Activated CD4-positive, alpha-beta T cell treated with anti-CD3 and anti-CD28 coated beads, Interleukin-2, amount 10 ng/mL, durations not matched to agents 24 days and 14 days (primary cell): ENCODE measurements at regions of chr18 and their contacts with region 1.

Region 1: DNA sequence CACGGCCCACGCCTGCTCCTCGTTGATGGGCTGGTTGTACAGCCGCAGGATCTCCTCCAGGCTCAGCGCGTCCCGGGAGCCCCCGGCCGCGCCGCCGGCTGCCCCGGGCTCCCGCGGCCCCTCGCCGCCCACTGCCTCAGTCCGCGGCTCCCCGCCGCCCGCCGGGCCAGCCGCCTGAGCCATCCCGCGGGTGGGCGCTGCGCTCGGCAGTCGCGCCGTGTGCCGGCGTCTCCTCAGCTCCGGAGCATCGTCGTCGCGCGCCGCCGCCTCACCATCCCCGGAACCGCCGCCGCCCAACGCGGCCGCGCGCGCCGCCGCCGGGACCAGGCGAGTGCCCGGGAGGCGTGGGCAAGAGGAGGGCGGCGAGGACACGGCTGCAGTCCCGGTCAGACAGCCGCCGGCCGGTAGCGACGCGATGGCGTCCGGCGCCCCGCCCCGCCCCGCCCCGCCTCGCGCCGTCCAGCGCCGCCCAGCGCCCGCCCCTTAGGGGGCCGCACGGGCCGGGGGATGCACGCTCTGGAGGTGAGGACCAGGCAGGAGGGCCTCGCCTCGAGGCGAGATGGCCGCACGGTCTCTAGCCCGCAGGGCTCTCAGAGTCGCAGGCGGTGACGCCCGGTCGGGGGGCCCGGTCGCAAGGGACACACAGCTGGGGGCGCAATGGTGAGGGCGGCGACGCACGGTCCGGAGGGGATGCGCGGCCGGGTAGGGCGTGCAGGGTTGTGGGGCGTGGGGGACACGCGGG is at the start of gene SPIRE1:
- DNase-seq: peak; percentile 86
- H3K4me3 Mint-ChIP-seq: peak within 1 kb of the TSS; percentile 86
- H3K27ac Mint-ChIP-seq: peak within 1 kb of the TSS; percentile 77
- H3K4me1 Mint-ChIP-seq: peaks cover 25% of the 10 kb centered on the region
- H3K27me3 Mint-ChIP-seq: peaks cover 23% of the 10 kb centered on the region
- total RNA-seq, gene SPIRE1: 7.6 and 8.4 TPM in 2 replicates

Region 2: DNA sequence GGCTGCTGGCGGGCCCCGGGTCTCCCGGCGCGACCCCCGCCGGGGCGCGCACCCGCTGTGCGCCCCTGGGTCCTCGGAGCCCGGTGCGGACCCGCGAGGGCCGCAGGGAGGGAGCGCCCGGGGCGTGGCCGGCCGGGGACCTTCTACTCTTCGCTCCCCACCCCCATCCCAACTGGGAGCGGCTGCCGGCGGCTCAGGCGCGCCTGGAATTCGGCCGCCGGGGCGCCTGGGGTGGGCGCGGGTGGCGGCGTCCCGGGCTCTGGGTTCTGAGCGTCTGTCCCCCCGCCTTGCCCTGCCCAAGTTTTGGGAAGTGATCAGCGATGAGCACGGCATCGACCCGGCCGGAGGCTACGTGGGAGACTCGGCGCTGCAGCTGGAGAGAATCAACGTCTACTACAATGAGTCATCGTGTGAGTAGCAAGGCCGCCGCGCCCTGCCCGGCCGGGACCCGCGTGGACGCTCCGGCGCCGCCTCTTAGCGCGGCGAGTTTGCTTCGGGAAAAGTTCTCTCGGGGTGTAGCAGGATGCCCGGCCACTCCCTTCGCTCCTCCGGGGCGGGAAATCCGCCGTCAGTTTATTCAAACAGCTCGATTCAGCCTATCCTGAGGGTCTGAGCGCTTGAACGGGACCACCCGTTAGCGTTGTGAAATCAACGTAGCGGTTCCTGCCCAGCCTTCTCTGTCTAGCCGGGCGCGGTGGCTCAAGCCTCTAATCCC is 349.3 kb before region 1 on chr18:
- intact Hi-C with region 1: loop called (anchors 1 kb)
- DNase-seq: peak; percentile 79
- H3K4me3 Mint-ChIP-seq: peak overlapping the region; percentile 82
- H3K27ac Mint-ChIP-seq: peak overlapping the region; percentile 60
- H3K4me1 Mint-ChIP-seq: peaks cover 16% of the 10 kb centered on the region
- H3K27me3 Mint-ChIP-seq: peaks cover 35% of the 10 kb centered on the region

Region 3: DNA sequence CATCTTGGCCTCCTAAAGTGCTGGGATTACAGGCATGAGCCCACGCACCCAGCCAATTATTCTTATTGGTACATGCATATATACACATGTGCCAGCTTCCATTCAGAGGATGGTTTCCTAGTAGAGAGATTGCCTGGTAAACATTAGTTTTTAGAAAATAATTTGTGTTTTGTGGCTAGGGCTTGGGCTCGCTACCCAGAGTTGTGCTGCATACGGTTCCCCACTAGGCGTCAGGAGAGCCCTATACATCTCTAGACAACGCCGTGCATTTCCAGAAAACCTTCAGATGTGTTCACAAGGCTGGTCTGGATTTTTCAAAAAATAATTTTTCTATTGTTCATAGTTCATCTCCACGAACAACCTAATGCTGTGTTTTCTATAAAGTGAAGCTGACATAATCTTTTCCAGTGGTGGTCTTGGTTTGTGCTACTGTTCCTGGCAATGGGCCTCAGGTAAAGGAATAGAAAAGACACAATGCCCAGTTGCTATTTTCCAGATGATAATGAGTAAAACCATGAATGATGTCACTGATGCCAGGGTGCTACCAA is 266.2 kb before region 1 on chr18:
- intact Hi-C with region 1: loop called (anchors 1 kb)
- DNase-seq: peak; percentile 85
- H3K4me3 Mint-ChIP-seq: no peak overlapping the region
- H3K27ac Mint-ChIP-seq: no peak overlapping the region
- H3K4me1 Mint-ChIP-seq: no peaks in the 10 kb centered on the region
- H3K27me3 Mint-ChIP-seq: peaks cover 6% of the 10 kb centered on the region

Region 4: DNA sequence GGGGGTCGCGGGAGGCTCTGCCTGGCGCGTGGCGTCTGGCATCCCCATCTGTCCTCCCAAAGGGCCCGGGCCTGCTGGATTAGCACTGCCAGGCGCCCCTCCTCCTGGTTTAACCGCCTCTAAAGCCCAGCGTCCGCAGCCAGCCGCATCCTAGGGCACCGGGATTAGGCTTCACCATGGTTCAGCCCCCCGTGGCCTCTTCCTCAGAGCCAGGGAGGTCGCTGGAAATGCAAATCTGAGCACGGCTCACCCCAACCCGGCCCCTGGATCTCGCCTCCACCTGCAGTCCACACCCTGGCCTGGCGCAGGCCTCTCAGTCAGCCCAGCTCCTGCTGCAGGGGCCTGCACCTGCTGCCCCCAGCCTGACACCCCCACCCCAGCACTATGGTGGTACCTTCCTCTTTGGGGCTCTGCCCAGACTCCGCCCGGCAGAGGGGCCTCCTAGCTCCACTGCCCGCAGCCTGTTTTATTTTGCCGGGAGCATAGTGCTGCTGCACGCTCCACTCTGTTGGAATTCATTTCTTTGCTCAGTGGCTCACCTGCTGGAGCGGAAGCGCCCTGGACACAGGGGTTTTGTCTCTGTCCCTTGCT is 236.9 kb before region 1 on chr18:
- intact Hi-C with region 1: loop called (anchors 1 kb)
- DNase-seq: no peak
- H3K4me3 Mint-ChIP-seq: peak overlapping the region; percentile 72
- H3K27ac Mint-ChIP-seq: peak overlapping the region; percentile 66
- H3K4me1 Mint-ChIP-seq: peaks cover 9% of the 10 kb centered on the region
- H3K27me3 Mint-ChIP-seq: no peaks in the 10 kb centered on the region

Region 5: GRCh38 chr18:12574494-12575185 is 83.2 kb before region 1 on chr18:
- intact Hi-C with region 1: no loop called
- DNase-seq: no peak
- H3K4me3 Mint-ChIP-seq: no peak overlapping the region
- H3K27ac Mint-ChIP-seq: no peak overlapping the region
- H3K4me1 Mint-ChIP-seq: no peaks in the 10 kb centered on the region
- H3K27me3 Mint-ChIP-seq: peaks cover 9% of the 10 kb centered on the region

Region 6: DNA sequence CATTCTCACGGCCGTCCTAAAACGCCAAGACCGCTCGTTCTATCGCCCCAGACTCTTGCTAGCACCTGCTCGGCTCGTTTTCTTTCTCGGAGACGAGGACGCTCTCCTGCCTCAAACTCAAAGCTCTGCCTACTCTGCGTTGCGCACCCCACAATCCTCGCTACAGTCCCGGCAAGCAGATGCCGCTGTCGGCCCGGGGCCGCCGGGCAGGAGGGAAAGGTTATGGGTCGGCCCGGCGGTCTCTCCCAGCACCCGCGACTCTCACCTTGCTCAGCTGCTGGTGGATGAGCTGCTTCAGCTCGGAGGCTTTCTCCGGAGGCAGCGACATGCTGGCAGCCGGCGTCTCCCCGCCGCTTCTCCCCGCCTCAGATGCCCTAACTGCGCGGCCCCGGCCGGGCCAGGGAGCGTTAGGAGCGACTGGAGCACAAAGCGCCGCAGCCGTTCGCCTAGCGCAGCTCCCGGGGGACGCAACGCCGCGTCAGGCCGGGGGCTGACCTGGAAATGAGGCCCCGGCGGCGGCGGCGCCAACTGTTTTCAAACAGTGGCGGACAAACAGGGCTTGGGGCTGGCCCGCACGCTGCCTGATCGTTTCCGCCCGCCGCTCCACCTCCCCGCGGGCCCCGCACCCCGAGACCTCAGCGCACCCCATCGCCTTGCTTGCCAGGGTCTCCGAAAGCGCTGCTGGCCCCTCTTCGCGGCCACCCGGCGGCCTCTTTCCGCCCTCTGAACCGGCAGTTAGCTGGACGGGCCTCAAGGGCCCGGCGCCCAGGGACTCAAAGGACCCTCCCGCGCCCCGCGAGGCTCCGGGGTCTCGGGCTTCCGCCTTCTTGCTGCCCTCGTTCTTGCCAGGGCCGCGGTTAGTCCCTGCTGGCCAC is 44.6 kb after region 1 on chr18 and contains the starts of genes CEP76 and PSMG2:
- intact Hi-C with region 1: loop called (anchors 2 kb)
- DNase-seq: peak; percentile 96
- H3K4me3 Mint-ChIP-seq: peak within 1 kb of the TSS; percentile 97
- H3K27ac Mint-ChIP-seq: peak within 1 kb of the TSS; percentile 97
- H3K4me1 Mint-ChIP-seq: peaks cover 36% of the 10 kb centered on the region
- H3K27me3 Mint-ChIP-seq: no peaks in the 10 kb centered on the region
- total RNA-seq, gene CEP76: 14.4 and 16.3 TPM in 2 replicates
- total RNA-seq, gene PSMG2: 109 and 111 TPM in 2 replicates

Region 7: DNA sequence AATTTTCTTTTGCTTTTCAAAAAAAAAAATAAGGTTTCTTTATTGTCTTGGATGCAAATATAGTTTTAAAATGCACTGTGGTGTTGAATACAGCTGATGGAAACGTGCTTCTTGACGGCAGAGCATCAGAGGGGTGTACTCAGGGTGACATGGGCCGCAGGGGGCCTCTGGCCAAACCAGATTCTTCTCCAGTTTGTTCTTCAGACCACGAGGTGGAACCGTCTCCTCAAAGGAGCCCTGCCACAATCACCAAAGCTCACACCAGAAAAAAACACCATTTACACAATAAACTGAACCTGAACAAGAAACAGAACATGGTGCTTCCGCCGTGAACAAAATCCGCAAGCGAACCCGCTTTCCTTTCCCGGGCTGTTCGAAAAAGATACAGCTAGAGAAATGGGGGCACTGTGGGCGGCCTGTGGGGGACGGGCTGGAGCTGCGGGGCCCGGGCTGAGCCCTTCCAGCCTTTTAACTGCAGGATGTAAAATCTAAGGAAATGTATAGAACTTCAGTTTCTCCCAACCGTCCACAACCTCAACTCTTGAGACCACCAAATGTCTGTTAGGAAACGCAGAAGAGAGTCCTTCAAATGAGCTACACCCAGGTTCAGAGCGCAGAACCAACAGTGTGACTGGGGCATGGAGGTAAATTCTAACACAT is 79.5 kb after region 1 on chr18:
- intact Hi-C with region 1: no loop called
- DNase-seq: no peak
- H3K4me3 Mint-ChIP-seq: no peak overlapping the region
- H3K27ac Mint-ChIP-seq: no peak overlapping the region
- H3K4me1 Mint-ChIP-seq: peaks cover 2% of the 10 kb centered on the region
- H3K27me3 Mint-ChIP-seq: peaks cover 2% of the 10 kb centered on the region

Region 8: DNA sequence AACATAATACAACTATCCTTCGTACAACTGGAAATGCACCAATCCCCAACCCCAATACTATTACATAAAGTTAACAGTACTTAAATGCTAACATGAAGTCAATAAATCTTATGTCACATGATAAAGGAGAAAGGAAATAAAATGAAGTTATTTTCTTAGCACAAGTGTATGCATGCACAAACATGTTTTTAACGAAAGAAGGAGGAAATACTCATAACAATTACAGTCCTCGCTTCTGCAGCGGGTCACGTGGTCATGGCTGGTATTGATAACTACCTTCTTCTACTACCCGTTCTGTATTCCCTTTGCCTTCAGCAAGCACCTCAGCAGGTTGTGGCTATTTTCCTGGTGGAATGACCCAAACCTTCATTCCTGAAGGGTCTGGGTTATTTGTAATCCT is 96.7 kb after region 1 on chr18:
- intact Hi-C with region 1: no loop called
- DNase-seq: no peak
- H3K4me3 Mint-ChIP-seq: no peak overlapping the region
- H3K27ac Mint-ChIP-seq: no peak overlapping the region
- H3K4me1 Mint-ChIP-seq: peaks cover 11% of the 10 kb centered on the region
- H3K27me3 Mint-ChIP-seq: no peaks in the 10 kb centered on the region